OCI-LY7 (cell line): ENCODE measurements at regions of chr2 and their contacts with region 1.

Region 1: GRCh38 chr2:121804340-121804739 is 48.9 kb downstream of the TSN start:
- DNase-seq: peak; percentile 89
- H3K4me3 ChIP-seq: peak overlapping the region; percentile 45
- H3K27ac ChIP-seq: peak overlapping the region; percentile 78
- H3K4me1 ChIP-seq: peaks cover 35% of the 10 kb centered on the region
- CTCF ChIP-seq: no peak

Region 2: DNA sequence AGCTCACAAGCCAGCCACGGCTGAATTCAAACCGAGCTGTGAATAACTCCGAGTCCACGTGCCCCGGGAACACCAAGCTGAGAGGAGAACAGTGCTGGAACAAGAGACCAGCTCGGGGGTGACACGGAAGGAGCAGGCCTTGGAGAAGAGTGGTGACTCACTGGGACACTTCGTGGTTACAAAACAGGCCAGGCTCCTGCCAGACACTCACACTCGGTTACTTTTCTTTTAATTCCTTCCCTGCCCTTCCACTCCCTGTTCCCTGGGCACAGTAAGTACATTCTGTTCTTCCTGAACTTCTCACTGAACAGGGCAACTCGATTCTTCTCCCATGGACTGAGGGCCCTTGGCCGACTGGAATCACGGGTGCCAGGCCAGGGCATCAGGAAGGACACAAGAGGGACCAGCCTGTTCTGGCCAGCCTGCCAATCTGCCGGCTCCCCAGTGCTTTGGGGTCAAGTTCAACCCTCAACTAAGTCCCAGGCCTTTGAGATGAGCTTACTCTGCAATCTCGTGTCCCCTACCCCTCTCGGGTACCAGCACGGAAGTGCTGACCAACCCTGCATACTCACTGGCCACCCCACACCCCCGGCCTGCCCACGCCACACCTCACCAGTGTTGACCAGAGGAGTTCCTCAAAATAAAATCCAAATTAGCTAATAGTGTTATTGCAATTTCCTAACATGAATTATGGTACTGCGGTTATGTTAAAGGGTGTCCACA is 606.8 kb before region 1 on chr2:
- CTCF ChIA-PET with region 1: no interaction called
- POLR2A ChIA-PET with region 1: no interaction called
- intact Hi-C with region 1: no loop called
- DNase-seq: no peak
- H3K4me3 ChIP-seq: no peak overlapping the region
- H3K27ac ChIP-seq: no peak overlapping the region
- H3K4me1 ChIP-seq: no peaks in the 10 kb centered on the region
- CTCF ChIP-seq: no peak

Region 3: DNA sequence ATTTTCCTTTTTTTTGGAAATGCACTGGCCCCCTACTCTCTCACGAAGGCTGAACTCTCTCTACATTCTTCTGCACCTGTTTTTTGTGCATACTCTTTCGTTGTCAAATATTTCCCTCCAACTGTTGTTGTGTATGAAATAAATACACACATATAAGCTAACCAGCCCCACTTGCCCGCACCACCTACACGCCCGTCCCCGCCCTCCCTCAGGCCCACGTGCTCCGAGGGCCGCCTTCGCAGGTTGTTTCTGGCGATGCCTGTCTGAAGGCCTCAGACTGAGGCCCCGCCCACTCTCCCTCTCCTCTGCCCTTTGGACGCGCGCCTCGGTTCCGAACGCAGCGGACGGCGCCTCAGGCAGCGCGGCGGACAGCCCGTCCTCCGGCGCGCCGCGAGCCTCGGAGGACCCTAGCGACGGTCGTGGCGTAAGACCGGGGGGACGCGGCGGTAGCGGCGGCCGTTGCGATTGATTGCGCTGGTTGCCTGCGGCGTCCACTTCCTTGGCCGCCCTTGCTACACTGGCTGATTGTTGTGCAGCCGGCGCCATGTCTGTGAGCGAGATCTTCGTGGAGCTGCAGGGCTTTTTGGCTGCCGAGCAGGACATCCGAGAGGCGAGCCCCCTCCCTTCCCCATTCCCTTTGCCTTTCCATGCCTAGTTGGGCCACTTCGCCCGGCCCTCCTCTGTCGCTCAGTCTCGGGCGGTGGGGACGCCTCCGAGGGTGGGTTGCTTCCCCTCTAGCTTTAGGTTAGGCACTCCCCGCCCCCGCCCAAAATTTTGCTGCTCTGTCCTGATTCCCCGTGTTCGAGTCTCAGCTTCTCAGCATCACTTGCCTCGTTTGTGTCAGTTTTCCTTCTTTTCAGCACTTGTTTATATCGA is 48.9 kb before region 1 on chr2 and contains the start of gene TSN:
- CTCF ChIA-PET with region 1: no interaction called
- POLR2A ChIA-PET with region 1: interaction called, 10 read pairs
- intact Hi-C with region 1: loop called (anchors 1 kb)
- DNase-seq: peak; percentile 99
- H3K4me3 ChIP-seq: peak within 1 kb of the TSS; percentile 99
- H3K27ac ChIP-seq: peak within 1 kb of the TSS; percentile 63
- H3K4me1 ChIP-seq: peaks cover 29% of the 10 kb centered on the region
- CTCF ChIP-seq: no peak
- total RNA-seq, gene TSN: 59.2 and 64.4 TPM in 2 replicates

Region 4: GRCh38 chr2:121771976-121772742 is 32.2 kb before region 1 on chr2:
- CTCF ChIA-PET with region 1: interaction called, 4 read pairs
- POLR2A ChIA-PET with region 1: interaction called, 42 read pairs
- intact Hi-C with region 1: loop called (anchors 1 kb)
- DNase-seq: peak; percentile 81
- H3K4me3 ChIP-seq: peak overlapping the region; percentile 43
- H3K27ac ChIP-seq: peak overlapping the region; percentile 87
- H3K4me1 ChIP-seq: peaks cover 27% of the 10 kb centered on the region
- CTCF ChIP-seq: no peak

Region 5: GRCh38 chr2:121816797-121817196 is 12.5 kb after region 1 on chr2:
- CTCF ChIA-PET with region 1: interaction called, 3 read pairs
- POLR2A ChIA-PET with region 1: interaction called, 46 read pairs
- intact Hi-C with region 1: loop called (anchors 1 kb)
- DNase-seq: peak; percentile 46
- H3K4me3 ChIP-seq: no peak overlapping the region
- H3K27ac ChIP-seq: no peak overlapping the region
- H3K4me1 ChIP-seq: peaks cover 66% of the 10 kb centered on the region
- CTCF ChIP-seq: no peak